ENCODE measurements at regions of chr10 and their contacts with region 1.

Region 1: DNA sequence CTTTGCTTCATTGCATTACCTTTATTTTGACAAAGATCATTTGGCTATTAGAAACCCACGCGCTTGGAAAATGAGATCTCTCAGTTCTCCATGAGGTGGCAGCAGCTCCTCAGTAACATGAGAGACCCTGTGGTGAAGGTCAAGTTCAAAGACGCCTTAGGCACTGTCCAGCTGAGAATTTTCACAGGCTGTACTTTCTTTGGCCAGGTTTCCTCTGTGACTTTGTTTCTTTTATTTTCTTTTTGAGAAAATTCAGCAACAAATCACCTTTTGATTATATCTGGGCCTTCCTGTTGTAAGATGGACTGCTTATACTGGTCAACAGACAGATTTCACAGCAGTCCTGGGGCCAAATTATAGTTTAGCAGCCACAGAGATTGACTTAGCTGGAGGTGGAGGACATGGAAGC is 54.5 kb downstream of the RAB18 start:
- DNase-seq: peak; percentile 59
- H3K4me3 Mint-ChIP-seq: no peak overlapping the region
- H3K27ac Mint-ChIP-seq: no peak overlapping the region
- H3K4me1 Mint-ChIP-seq: no peaks in the 10 kb centered on the region
- H3K27me3 Mint-ChIP-seq: no peaks in the 10 kb centered on the region
- CTCF ChIP-seq: peak; percentile 58

Region 2: DNA sequence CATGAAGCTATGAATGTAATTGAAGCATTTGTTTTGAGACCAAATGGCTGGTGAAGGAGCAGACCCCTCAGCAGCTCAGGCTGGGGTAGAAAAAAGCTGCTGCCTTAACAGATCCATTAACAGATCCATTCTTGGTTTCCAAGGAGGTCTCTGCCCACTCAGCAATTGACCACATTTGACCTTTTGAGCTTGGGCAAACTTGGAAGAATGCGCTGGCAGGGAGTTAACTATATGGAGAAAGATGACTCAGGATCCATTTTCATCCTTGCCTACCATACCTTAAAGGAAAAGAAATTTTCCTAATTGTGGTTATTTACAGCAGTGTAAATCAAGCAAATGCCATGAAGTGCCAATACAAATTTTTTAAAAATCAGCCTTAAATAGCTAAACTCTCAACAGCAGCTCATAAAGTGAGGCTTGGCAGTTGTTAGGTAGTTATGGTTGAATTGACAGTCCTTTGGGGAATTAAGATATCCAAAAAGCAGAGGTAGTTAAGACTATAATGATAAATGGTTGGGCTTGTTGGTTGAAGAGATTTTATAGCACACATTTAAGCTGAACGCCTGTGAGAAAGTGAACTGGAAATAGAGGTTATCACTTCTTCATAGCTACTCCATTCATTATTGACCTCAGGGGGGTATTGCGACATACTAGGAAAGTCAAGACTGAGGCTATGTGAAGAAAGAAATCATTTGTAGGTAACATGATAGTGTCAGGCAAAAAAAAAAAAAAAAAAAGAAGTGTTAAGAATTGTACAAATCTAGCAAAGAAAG is 103.1 kb after region 1 on chr10:
- CTCF ChIA-PET with region 1: interaction called, 3 read pairs
- intact Hi-C with region 1: loop called (anchors 1 kb)
- DNase-seq: no peak
- H3K4me3 Mint-ChIP-seq: no peak overlapping the region
- H3K27ac Mint-ChIP-seq: peak overlapping the region; percentile 27
- H3K4me1 Mint-ChIP-seq: no peaks in the 10 kb centered on the region
- H3K27me3 Mint-ChIP-seq: peaks cover 33% of the 10 kb centered on the region
- CTCF ChIP-seq: no peak

Region 3: GRCh38 chr10:27826369-27826768 is 267.8 kb after region 1 on chr10:
- CTCF ChIA-PET with region 1: no interaction called
- intact Hi-C with region 1: no loop called
- DNase-seq: no peak
- H3K4me3 Mint-ChIP-seq: no peak overlapping the region
- H3K27ac Mint-ChIP-seq: no peak overlapping the region
- H3K4me1 Mint-ChIP-seq: no peaks in the 10 kb centered on the region
- H3K27me3 Mint-ChIP-seq: no peaks in the 10 kb centered on the region
- CTCF ChIP-seq: no peak

Region 4: GRCh38 chr10:28179006-28179742 is 620.6 kb after region 1 on chr10:
- CTCF ChIA-PET with region 1: interaction called, 4 read pairs
- intact Hi-C with region 1: loop called (anchors 10 kb)
- DNase-seq: peak; percentile 57
- H3K4me3 Mint-ChIP-seq: peak overlapping the region; percentile 3
- H3K27ac Mint-ChIP-seq: peak overlapping the region; percentile 23
- H3K4me1 Mint-ChIP-seq: peaks cover 17% of the 10 kb centered on the region
- H3K27me3 Mint-ChIP-seq: no peaks in the 10 kb centered on the region
- CTCF ChIP-seq: peak; percentile 60

Region 5: GRCh38 chr10:28393966-28394568 is 835.5 kb after region 1 on chr10:
- CTCF ChIA-PET with region 1: interaction called, 8 read pairs
- intact Hi-C with region 1: loop called (anchors 10 kb)
- DNase-seq: peak; percentile 65
- H3K4me3 Mint-ChIP-seq: no peak overlapping the region
- H3K27ac Mint-ChIP-seq: no peak overlapping the region
- H3K4me1 Mint-ChIP-seq: peaks cover 9% of the 10 kb centered on the region
- H3K27me3 Mint-ChIP-seq: peaks cover 2% of the 10 kb centered on the region
- CTCF ChIP-seq: peak; percentile 88